AG04449 (cell line): ENCODE measurements at regions of chr16 and their contacts with region 1.

Region 1: DNA sequence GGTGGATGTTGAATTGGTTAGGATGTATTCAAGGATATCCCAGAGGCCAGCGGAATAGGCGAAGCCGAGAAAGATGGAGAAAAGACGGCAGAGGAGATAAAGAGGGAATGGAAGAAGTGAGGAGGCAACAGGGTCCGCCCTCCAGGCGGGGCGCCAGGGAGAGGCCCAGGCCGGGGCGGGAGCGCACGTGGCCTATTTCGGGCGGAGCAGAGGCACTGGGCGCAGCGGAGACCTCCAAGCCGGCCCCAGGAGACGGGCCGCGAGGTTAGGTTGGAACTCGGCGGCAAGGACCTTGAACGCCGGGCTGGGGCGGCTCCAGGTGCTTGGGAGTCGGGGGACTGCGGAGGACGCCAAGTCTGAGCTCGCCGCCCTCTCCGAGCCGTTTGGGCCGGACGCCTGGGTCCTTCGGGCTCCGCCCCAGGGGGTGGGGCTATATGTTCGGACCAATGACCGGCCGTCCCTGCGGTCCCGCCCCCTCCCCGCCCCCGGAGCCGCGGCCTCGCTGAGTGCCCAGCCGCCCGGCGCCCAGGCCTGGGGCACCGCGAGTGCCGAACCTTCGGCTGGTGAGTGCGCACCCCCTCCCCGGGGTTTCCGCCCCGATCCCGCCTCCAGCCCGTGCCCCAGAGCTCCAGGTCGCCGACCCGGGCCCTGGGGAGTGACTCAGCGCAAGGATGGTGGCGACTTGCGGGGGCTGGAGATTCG is at the start of gene ZNF771:
- DNase-seq: peak; percentile 17
- H3K4me3 ChIP-seq: peak within 1 kb of the TSS; percentile 76
- CTCF ChIP-seq: no peak

Region 2: GRCh38 chr16:30041846-30042267 is 365.4 kb before region 1 on chr16:
- CTCF ChIA-PET with region 1: interaction called, 11 read pairs
- POLR2A ChIA-PET with region 1: no interaction called
- DNase-seq: no peak
- H3K4me3 ChIP-seq: no peak overlapping the region
- CTCF ChIP-seq: no peak

Region 3: DNA sequence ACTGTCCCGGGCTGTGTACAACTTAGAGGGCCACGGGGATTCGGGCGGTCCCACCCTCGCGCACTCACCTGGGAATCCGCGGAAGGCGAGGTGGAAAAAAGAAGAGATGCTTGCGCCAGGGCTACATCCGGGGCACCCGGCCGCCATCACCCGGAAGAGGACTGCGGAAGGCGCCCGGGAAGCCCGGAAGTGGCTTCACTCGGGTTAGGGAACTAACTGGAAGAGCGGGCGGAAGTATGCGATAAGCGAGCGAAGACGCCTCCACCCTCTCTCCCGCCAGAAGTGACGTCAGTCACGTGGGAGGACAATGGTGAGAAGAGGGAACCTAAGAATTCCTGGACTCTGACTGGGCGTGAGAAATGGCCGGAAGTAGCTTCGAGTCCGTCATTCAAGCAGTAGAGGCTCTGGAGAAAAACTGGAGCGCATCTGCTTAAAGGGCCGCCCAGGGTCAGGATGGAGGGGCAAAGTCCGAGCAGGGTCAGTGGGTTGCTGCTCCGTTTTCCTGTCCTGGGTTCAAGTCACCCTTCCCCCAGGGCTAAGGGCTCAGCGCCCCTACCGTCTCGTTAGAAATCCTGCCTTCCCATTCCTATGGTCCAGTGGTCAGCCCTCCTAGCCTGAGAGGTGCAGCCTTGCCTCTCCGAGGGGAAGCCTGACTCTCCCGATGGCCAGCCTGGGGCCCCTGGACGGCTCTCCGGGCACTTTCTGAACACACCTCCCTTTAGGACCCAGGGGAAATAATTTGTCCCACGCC is 51.9 kb before region 1 on chr16 and contains the start of gene CD2BP2:
- CTCF ChIA-PET with region 1: interaction called, 14 read pairs
- POLR2A ChIA-PET with region 1: interaction called, 3 read pairs
- DNase-seq: peak; percentile 97
- H3K4me3 ChIP-seq: peak within 1 kb of the TSS; percentile 97
- CTCF ChIP-seq: peak; percentile 7

Region 4: GRCh38 chr16:30395155-30395991 is 11.9 kb before region 1 on chr16 and contains the start of gene ZNF48:
- CTCF ChIA-PET with region 1: interaction called, 52 read pairs
- POLR2A ChIA-PET with region 1: interaction called, 11 read pairs
- DNase-seq: peak; percentile 21
- H3K4me3 ChIP-seq: peak within 1 kb of the TSS; percentile 77
- CTCF ChIP-seq: peak; percentile 24

Region 5: GRCh38 chr16:30429678-30430427 is 22.6 kb after region 1 on chr16 and contains the start of gene DCTPP1:
- CTCF ChIA-PET with region 1: interaction called, 94 read pairs
- POLR2A ChIA-PET with region 1: no interaction called
- DNase-seq: peak; percentile 91
- H3K4me3 ChIP-seq: peak within 1 kb of the TSS; percentile 94
- CTCF ChIP-seq: peak; percentile 71